ENCODE measurements at regions of chr4 and their contacts with region 1.

Region 1: GRCh38 chr4:8403173-8403753 is 37.3 kb downstream of the ACOX3 start:
- DNase-seq: peak; percentile 83 to 89 (median 88)
- ATAC-seq: peak; percentile 95 to 99 (median 98)
- H3K4me3 ChIP-seq: no peak overlapping the region
- H3K27ac ChIP-seq: no peak overlapping the region
- H3K4me1 ChIP-seq: no peaks in the 10 kb centered on the region
- H3K27me3 ChIP-seq: no peaks in the 10 kb centered on the region
- CTCF ChIP-seq: peak; percentile 90 to 94 (median 92)
- POLR2A ChIP-seq: no peak

Region 2: GRCh38 chr4:8176547-8177399 is 226.5 kb before region 1 on chr4:
- intact Hi-C with region 1: loop called in 1 of 2 experiments (anchors 10 kb)
- DNase-seq: peak in 2 of 3 donors; percentile 14 to 66
- ATAC-seq: peak; percentile 84 to 92 (median 89)
- H3K4me3 ChIP-seq: no peak overlapping the region
- H3K27ac ChIP-seq: no peak overlapping the region
- H3K4me1 ChIP-seq: peaks cover 0 to 4% (median 0%) of the 10 kb centered on the region in 4 donors
- H3K27me3 ChIP-seq: no peaks in the 10 kb centered on the region
- CTCF ChIP-seq: peak; percentile 78 to 92 (median 84)
- POLR2A ChIP-seq: no peak

Region 3: DNA sequence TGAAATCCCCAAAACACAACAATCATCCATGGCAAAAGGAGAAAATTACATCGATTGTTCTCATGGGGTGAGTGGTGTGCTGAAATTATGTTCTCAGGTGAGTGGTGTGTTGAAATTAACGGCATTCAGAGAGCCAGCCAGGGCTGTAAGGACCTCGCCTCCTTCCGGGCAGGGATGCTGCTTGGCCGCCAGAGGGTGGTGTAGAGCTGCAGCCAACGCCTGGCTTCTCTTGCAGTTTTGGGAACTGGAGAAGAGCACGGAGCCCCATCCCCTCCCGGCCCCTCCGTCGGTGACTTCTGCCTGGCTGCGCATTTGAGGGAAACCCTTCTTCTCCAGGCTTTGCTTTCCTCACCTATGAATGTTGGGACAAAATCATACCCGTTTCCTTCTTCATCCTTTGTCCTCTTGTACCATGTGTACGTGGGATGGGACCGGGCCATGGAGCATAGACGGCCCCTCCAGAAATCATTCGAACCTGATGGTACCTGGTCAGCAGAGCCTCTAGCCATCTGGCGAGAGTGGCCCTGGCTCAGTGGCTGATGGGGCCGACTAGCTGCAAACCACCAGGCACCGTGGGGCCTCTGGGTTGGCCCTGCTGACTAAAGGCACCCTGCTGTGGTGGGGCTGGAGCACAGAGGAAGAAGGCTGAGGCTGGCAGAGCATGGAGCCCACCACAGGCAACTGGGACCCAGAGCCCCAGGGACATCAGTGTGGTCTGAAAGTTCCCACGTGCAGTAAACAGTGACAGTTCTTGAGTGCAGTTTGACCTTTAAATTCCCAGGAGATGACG is 65.7 kb after region 1 on chr4:
- intact Hi-C with region 1: no loop called
- DNase-seq: peak; percentile 67 to 76 (median 68)
- ATAC-seq: peak; percentile 75 to 90 (median 84)
- H3K4me3 ChIP-seq: no peak overlapping the region
- H3K27ac ChIP-seq: no peak overlapping the region
- H3K4me1 ChIP-seq: no peaks in the 10 kb centered on the region
- H3K27me3 ChIP-seq: no peaks in the 10 kb centered on the region
- CTCF ChIP-seq: peak; percentile 76 to 90 (median 85)
- POLR2A ChIP-seq: no peak

Measured in right lobe of liver (tissue), 6 donors.